MCF 10A (cell line): ENCODE measurements at regions of chr4 and their contacts with region 1.

Region 1: DNA sequence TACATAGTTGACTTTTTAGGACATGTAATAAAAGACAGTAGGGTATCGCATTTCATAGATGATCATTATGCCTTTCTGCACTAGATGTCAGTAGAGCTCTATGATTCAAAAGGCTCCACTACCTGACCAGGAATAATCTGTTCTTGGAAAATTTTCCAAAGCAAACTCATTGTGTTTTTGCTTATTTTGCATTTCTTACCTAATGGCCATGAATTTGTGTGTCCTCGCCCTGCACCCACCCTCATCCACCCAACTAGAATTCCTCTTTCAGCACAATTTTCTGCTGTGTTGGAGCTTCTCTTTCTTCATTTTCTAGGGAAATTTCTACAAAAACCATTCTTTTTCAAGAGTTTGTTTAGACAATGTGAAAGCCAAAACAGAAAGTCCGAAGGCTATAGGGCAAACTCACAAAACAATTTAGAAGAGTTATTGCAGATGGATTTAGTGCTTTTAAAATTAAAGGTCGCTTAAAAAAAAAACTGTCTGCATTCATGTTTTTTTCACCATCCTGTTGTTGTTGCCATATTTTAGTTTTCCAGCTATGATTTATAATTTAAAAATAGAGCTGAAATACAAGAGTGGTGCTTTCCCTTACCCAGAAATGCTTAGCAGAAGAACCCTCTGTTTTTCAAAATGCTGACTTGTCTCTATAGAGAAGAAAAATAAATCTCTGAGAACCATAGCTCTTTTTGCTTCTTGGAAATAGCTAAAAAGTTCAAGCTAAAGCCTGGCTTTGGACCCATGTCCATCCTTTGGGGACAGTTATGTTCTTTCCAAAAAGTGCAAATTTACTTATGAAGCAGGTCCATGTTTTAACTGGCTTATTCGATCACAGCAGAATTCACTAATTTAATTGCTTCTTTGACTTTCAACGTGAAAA is 183.7 kb downstream of the SPATA18 start:
- DNase-seq: peak; percentile 69
- H3K4me3 Mint-ChIP-seq: no peak overlapping the region
- H3K27ac Mint-ChIP-seq: no peak overlapping the region
- H3K4me1 Mint-ChIP-seq: no peaks in the 10 kb centered on the region
- H3K27me3 Mint-ChIP-seq: peaks cover 12% of the 10 kb centered on the region
- CTCF ChIP-seq: peak; percentile 69

Region 2: GRCh38 chr4:52103319-52103718 is 131.5 kb before region 1 on chr4:
- CTCF ChIA-PET with region 1: interaction called, 3 read pairs
- POLR2A ChIA-PET with region 1: no interaction called
- intact Hi-C with region 1: loop called (anchors 1 kb)
- DNase-seq: peak; percentile 50
- H3K4me3 Mint-ChIP-seq: no peak overlapping the region
- H3K27ac Mint-ChIP-seq: no peak overlapping the region
- H3K4me1 Mint-ChIP-seq: peaks cover 21% of the 10 kb centered on the region
- H3K27me3 Mint-ChIP-seq: no peaks in the 10 kb centered on the region
- CTCF ChIP-seq: peak; percentile 22

Region 3: GRCh38 chr4:52199574-52200338 is 35.0 kb before region 1 on chr4:
- CTCF ChIA-PET with region 1: no interaction called
- POLR2A ChIA-PET with region 1: no interaction called
- intact Hi-C with region 1: no loop called
- DNase-seq: peak; percentile 80
- H3K4me3 Mint-ChIP-seq: no peak overlapping the region
- H3K27ac Mint-ChIP-seq: no peak overlapping the region
- H3K4me1 Mint-ChIP-seq: no peaks in the 10 kb centered on the region
- H3K27me3 Mint-ChIP-seq: no peaks in the 10 kb centered on the region
- CTCF ChIP-seq: no peak

Region 4: DNA sequence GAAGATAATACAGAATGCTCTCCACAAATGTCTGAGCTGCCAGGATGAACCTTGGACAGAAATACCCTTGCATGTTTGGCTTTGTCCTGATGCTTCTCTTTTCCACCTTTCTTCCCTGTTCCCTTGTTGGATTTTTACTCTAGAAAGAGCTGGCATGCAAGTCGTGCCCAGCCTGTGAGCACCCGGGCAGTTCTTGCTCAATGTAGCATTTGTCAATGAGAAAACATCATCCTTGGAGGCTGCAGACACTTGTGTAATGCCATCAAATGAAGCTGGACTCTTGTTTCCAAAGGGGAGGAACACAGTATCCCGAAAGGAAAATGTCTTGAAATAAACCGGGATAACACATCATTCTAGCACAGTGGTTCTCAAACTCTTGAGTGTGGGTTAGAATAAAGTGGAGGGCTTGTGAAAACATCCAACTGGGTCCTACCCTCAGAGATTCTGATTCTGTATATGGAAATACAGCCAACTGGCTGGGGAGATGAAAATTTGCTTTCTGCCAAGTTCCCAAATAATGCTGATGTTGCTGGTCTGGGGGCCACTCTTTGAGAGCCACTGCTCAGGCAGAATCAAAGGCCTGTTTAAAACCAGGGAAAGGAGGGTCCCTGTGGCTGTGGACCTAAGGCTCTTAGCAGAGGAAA is 53.5 kb after region 1 on chr4:
- CTCF ChIA-PET with region 1: no interaction called
- POLR2A ChIA-PET with region 1: no interaction called
- intact Hi-C with region 1: no loop called
- DNase-seq: no peak
- H3K4me3 Mint-ChIP-seq: no peak overlapping the region
- H3K27ac Mint-ChIP-seq: no peak overlapping the region
- H3K4me1 Mint-ChIP-seq: no peaks in the 10 kb centered on the region
- H3K27me3 Mint-ChIP-seq: no peaks in the 10 kb centered on the region
- CTCF ChIP-seq: no peak

Region 5: GRCh38 chr4:52376132-52376704 is 141.4 kb after region 1 on chr4:
- CTCF ChIA-PET with region 1: interaction called, 18 read pairs
- POLR2A ChIA-PET with region 1: no interaction called
- intact Hi-C with region 1: loop called (anchors 2 kb)
- DNase-seq: peak; percentile 70
- H3K4me3 Mint-ChIP-seq: no peak overlapping the region
- H3K27ac Mint-ChIP-seq: no peak overlapping the region
- H3K4me1 Mint-ChIP-seq: peaks cover 5% of the 10 kb centered on the region
- H3K27me3 Mint-ChIP-seq: peaks cover 33% of the 10 kb centered on the region
- CTCF ChIP-seq: peak; percentile 57

Region 6: DNA sequence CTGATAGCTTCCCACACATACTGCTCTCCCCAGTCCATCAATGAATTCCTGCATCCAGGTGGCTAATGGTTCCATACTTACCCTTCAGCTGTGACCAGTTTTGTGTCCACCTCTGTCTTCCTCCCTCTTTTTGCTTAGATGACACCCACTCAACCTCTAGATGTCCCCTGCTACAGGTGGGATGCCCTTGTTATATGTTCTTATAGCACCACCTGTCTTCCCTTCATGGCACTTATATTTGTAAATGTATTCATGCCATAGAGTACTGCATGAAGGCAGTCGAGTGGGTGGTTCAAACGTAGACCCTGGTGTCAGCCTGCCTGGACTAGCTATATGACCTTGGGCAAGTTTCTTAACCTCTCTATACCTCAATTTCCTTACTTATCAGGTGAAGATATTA is 430.8 kb after region 1 on chr4:
- CTCF ChIA-PET with region 1: no interaction called
- POLR2A ChIA-PET with region 1: no interaction called
- intact Hi-C with region 1: loop called (anchors 2 kb)
- DNase-seq: peak; percentile 29
- H3K4me3 Mint-ChIP-seq: no peak overlapping the region
- H3K27ac Mint-ChIP-seq: no peak overlapping the region
- H3K4me1 Mint-ChIP-seq: peaks cover 10% of the 10 kb centered on the region
- H3K27me3 Mint-ChIP-seq: no peaks in the 10 kb centered on the region
- CTCF ChIP-seq: peak; percentile 24